K562 (cell line): ENCODE measurements at regions of chr16 and their contacts with region 1.

Region 1: DNA sequence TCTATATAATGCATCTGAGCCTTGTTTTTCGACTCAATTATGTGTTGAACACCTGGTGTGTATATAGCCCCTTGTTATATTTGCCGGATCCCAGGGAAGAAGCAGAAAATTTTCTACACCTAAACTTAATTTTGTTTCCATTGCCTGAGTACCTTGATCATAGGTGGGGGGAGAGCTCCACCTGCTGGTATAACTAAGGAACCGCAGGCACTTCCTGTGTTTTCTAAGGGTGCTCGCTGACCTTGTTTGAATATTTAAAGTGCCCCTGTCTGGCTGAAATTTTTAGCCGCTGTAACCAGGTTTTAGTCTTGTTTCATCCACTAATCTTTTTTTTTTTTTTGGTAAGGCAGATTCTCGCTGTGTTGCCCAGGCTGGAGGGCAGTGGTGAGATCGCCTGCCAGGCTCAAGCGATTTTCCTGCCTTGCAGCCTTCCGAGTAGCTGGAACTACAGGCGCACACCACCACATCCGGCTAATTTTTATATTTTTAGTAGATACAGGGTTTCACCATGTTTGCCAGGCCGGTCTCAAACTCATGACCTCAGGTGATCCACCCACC is 6.5 kb upstream of the NUBP1 start:
- DNase-seq: peak; percentile 67 to 81 (median 72)
- ATAC-seq: peak; percentile 79
- H3K4me3 ChIP-seq: no peak overlapping the region
- H3K27ac ChIP-seq: peak overlapping the region; percentile 79; the same call in 2 of the 3 replicates
- H3K4me1 ChIP-seq: peaks cover 17 to 26% of the 10 kb centered on the region in 2 experiments
- H3K27me3 ChIP-seq: no peaks in the 10 kb centered on the region
- CTCF ChIP-seq: peak; percentile 79 to 95 (median 85)
- EP300 ChIP-seq: no peak
- POLR2A ChIP-seq: no peak
- RAD21 ChIP-seq: peak; percentile 91 to 93

Region 2: DNA sequence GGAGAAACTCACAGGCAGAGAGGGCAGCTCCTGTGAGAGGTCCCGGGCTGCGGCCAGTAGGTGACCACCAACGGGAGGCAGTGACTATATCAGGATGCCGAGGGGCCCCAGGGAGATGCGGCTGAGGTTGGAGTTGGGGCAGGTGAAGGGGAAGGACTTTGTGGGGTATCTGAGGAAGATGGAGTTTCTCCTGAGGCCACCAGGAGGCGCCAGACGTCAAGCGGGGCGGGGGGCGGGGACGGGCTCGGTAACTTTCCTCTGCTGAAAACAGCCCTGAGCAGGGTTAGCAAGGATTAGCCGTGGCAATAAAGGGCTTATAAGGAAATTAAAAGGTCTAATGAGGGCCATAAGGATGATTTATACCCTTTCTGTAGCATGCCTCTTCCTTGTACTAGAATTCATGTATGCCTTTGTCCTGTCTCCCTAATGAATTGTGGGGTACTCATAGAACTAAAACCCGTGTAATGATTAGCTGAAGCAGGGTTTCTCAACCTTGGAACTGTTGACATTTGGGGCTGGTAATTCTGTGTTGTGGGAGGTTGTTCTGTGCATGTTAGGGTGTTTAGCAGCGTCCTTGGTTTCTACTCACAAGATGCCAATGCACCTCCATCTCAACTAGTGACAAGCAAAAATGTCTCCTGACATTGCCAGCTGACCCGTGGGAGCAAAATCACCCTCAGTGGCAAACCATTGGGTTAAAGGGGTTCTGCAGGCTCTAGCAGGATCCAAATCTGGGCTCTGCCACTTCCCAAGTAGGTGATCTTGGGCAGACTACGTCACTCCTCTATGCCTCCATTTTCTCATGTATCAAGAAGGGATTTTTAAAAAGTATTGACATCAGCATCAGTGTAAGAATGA is 480.1 kb before region 1 on chr16:
- CTCF ChIA-PET with region 1: interaction called, 4 read pairs
- POLR2A ChIA-PET with region 1: no interaction called
- in situ Hi-C with region 1: loop called (anchors 5 kb)
- intact Hi-C with region 1: loop called (anchors 10 kb)
- DNase-seq: peak; percentile 66 to 88 (median 86)
- ATAC-seq: peak; percentile 87
- H3K4me3 ChIP-seq: no peak overlapping the region
- H3K27ac ChIP-seq: no peak overlapping the region
- H3K4me1 ChIP-seq: peaks cover 0 to 6% of the 10 kb centered on the region in 2 experiments; a peak in 3 of 5 replicates
- H3K27me3 ChIP-seq: peaks cover 9 to 12% of the 10 kb centered on the region in 2 experiments; a peak in 4 of 5 replicates
- CTCF ChIP-seq: peak; percentile 73 to 83 (median 82)
- EP300 ChIP-seq: no peak
- POLR2A ChIP-seq: no peak
- RAD21 ChIP-seq: peak; percentile 67 to 82

Region 3: DNA sequence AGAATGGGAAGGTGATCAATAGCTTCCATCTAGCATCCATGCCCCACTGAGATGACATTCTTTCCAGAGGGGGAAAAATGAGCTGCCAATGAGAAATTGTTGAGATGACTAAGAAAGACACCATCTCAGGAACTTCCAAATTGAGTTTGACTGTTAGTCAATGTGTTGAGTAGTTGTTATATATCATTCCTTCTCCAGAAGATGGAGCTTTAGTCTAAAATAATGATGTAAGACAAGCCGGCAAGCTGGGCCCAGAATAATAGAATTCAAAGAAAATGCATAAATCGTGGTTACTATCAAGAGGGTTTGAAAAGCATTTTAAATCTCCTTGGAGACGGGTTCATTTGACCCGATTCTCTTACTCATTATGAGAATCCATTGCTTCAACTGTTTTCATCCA is 422.3 kb before region 1 on chr16:
- CTCF ChIA-PET with region 1: no interaction called
- POLR2A ChIA-PET with region 1: no interaction called
- in situ Hi-C with region 1: no loop called
- intact Hi-C with region 1: loop called (anchors 5 kb)
- DNase-seq: peak in 1 of 4 experiments; percentile 42
- ATAC-seq: peak; percentile 79
- H3K4me3 ChIP-seq: no peak overlapping the region
- H3K27ac ChIP-seq: no peak overlapping the region
- H3K4me1 ChIP-seq: peaks cover 10 to 24% of the 10 kb centered on the region in 2 experiments
- H3K27me3 ChIP-seq: no peaks in the 10 kb centered on the region
- CTCF ChIP-seq: peak in 2 of 3 experiments; percentile 24 to 63; a peak in 3 of 6 replicates
- EP300 ChIP-seq: no peak
- POLR2A ChIP-seq: no peak
- RAD21 ChIP-seq: peak; percentile 67 to 91; a peak in 3 of 4 replicates

Region 4: GRCh38 chr16:10509534-10510025 is 227.6 kb before region 1 on chr16:
- CTCF ChIA-PET with region 1: interaction called, 59 read pairs
- POLR2A ChIA-PET with region 1: interaction called, 3 read pairs
- in situ Hi-C with region 1: loop called (anchors 5 kb)
- intact Hi-C with region 1: no loop called
- DNase-seq: peak; percentile 77 to 91 (median 81)
- ATAC-seq: peak; percentile 100
- H3K4me3 ChIP-seq: no peak overlapping the region
- H3K27ac ChIP-seq: no peak overlapping the region
- H3K4me1 ChIP-seq: peaks cover 0 to 4% of the 10 kb centered on the region in 2 experiments; a peak in 1 of 5 replicates
- H3K27me3 ChIP-seq: no peaks in the 10 kb centered on the region; a peak in 1 of 5 replicates
- CTCF ChIP-seq: peak; percentile 86 to 95 (median 88)
- EP300 ChIP-seq: no peak
- POLR2A ChIP-seq: no peak
- RAD21 ChIP-seq: peak; percentile 95 to 99

Region 5: GRCh38 chr16:10521681-10522274 is 215.4 kb before region 1 on chr16:
- CTCF ChIA-PET with region 1: interaction called, 59 read pairs
- POLR2A ChIA-PET with region 1: interaction called, 3 read pairs
- in situ Hi-C with region 1: no loop called
- intact Hi-C with region 1: loop called (anchors 1 kb)
- DNase-seq: peak; percentile 62 to 80 (median 70)
- ATAC-seq: peak; percentile 88
- H3K4me3 ChIP-seq: no peak overlapping the region
- H3K27ac ChIP-seq: no peak overlapping the region
- H3K4me1 ChIP-seq: no peaks in the 10 kb centered on the region
- H3K27me3 ChIP-seq: peaks cover 6 to 8% of the 10 kb centered on the region in 2 experiments; a peak in 4 of 5 replicates
- CTCF ChIP-seq: peak; percentile 86 to 93 (median 90)
- EP300 ChIP-seq: no peak
- POLR2A ChIP-seq: no peak
- RAD21 ChIP-seq: peak; percentile 51 to 84

Region 6: DNA sequence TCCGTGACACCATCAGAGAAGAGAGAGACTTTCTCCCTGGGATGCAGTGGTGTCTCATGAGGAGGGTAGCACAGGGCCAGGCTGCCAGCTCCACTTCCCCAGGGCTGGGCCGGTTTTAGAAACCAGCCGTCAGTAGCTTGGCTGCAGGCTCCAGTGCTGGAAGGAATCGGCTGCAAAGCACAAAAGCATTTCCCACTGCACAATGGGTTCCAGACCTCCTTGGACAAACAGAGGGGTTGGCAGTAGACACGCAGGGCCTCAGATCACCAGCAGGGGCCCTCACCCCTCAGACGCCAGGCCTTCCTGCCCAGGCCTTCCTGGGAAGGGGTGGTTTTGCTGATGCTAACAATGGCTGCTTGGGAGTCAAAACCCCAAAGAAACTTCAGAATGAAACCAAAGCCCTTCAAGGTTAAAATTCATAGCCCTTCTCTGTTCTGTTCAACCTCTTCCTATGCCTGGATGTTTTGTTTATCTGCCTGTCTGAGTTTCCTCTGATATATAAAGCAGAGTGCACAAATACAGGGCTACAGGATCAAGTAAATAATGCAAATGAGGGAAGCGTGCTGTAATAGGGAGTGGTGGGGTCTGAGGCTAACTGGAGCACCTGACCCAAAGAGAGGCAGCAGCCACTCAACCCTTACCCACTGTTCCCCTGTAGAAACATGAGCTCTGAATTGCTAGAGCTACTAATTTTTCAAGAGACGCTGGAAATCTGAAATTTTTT is 68.7 kb before region 1 on chr16:
- CTCF ChIA-PET with region 1: no interaction called
- POLR2A ChIA-PET with region 1: no interaction called
- in situ Hi-C with region 1: no loop called
- intact Hi-C with region 1: loop called (anchors 10 kb)
- DNase-seq: peak in 3 of 4 experiments; percentile 18 to 45 (median 23)
- ATAC-seq: peak; percentile 86
- H3K4me3 ChIP-seq: no peak overlapping the region
- H3K27ac ChIP-seq: no peak overlapping the region
- H3K4me1 ChIP-seq: no peaks in the 10 kb centered on the region; a peak in 1 of 5 replicates
- H3K27me3 ChIP-seq: peaks cover 4 to 26% of the 10 kb centered on the region in 2 experiments; a peak in 2 of 5 replicates
- CTCF ChIP-seq: peak; percentile 52 to 68 (median 54); a peak in 5 of 6 replicates
- EP300 ChIP-seq: no peak
- POLR2A ChIP-seq: no peak
- RAD21 ChIP-seq: peak in 1 of 2 experiments; percentile 41; a peak in 2 of 4 replicates

Region 7: GRCh38 chr16:10918294-10919002 is 181.3 kb after region 1 on chr16:
- CTCF ChIA-PET with region 1: interaction called, 3 read pairs
- POLR2A ChIA-PET with region 1: no interaction called
- in situ Hi-C with region 1: no loop called
- intact Hi-C with region 1: loop called (anchors 5 kb)
- DNase-seq: peak; percentile 80 to 93 (median 82)
- ATAC-seq: peak; percentile 97
- H3K4me3 ChIP-seq: no peak overlapping the region
- H3K27ac ChIP-seq: no peak overlapping the region
- H3K4me1 ChIP-seq: peaks cover 3 to 10% of the 10 kb centered on the region in 2 experiments; a peak in 2 of 5 replicates
- H3K27me3 ChIP-seq: peaks cover 6 to 17% of the 10 kb centered on the region in 2 experiments; a peak in 4 of 5 replicates
- CTCF ChIP-seq: peak; percentile 89 to 98 (median 95)
- EP300 ChIP-seq: no peak
- POLR2A ChIP-seq: no peak
- RAD21 ChIP-seq: peak; percentile 75 to 92